ENCODE measurements at regions of chr3 and their contacts with region 1.

Region 1: GRCh38 chr3:71875461-71875947 is 90.6 kb upstream of the PROK2 start:
- DNase-seq: peak; percentile 82
- ATAC-seq: peak; percentile 97

Region 2: DNA sequence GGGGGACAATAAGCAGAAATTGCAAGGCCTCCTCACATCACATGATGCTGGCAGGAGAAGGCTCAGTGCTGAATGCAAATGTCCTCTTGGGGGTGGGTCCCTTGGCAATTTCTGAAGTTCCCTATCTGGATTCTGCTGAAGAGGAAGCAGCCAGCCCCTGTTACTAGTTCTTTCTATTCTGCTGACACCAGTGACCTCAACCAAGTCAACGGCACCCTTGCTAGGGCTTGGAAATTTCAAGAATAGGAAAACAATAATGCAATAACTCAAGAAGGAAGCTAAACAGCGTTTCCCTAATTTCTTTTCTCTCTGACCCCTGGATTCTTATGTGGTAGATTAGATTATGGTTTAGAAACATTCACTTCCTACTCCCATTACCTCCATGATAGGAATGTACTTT is 245.8 kb before region 1 on chr3:
- intact Hi-C with region 1: no loop called
- DNase-seq: peak; percentile 42
- ATAC-seq: peak; percentile 77

Region 3: DNA sequence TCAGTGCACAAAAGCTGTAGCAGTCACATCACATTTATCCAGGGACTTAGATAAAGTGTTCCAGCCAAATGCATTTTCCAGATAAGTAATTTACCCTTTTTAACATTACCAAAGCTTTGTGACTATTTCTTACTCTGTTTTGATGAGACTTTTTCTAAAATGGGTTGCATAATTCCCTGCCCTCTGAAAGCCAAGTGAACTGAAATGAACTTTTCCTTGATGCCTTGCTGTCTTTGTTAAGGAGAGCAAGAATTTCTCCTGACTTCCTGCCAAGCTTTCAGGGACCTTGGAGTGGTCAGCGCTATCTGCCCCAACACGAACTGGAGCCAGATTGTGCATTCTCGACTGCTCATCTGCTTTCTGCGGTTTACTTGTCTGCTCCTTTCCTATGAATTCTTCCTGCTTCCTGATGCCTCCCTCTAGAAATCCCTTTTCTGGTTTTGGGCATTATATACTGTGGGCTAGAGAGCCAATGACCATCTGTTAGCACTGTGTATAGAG is 185.1 kb before region 1 on chr3:
- intact Hi-C with region 1: no loop called
- DNase-seq: no peak
- ATAC-seq: peak; percentile 70

Region 4: GRCh38 chr3:72265256-72266015 is 389.9 kb after region 1 on chr3:
- intact Hi-C with region 1: loop called (anchors 10 kb)
- DNase-seq: no peak
- ATAC-seq: no peak